ENCODE measurements at regions of chr7 and their contacts with region 1.

Region 1: DNA sequence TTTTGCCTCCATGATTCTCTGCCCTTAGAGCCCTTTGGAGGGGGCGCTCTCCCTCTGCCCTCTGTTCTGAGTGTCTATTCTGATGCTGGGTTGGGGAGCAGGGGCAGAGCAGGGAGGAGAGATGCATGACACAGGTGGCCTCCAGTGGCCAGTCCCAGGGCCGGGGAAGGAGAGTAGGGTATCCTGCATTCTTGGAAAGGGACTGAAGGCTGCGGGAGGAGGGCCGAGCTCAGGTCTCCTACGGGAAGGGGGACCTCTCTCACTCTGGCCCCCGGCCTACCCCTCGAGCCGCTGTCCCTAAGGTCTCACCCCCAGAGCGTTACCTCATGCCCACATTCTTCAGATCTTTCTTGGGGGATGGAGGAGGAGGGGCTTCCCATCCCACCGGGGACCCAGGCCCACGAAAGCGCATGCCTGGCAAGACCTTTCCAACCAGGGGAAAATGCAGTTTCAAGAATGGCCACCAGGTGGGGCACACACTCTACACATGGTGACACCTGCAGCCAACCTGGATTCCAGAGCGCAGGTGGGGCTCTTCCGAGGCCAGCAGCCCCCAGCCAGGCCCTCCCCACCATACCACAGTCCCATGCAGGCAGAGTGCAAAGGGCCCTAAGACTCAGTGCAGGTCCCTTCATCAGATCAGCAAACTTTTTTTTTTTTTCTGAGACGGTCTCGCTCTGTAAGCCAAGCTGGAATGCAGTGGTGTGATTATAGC is 86.4 kb downstream of the MYL10 start:
- DNase-seq: peak; percentile 79
- H3K4me3 ChIP-seq: no peak overlapping the region
- H3K27ac ChIP-seq: no peak overlapping the region
- H3K4me1 ChIP-seq: peaks cover 0 to 4% (median 0%) of the 10 kb centered on the region in 4 donors
- H3K27me3 ChIP-seq: no peaks in the 10 kb centered on the region
- CTCF ChIP-seq: peak; percentile 92 to 94 (median 94)
- EP300 ChIP-seq: no peak
- POLR2A ChIP-seq: no peak

Region 2: GRCh38 chr7:101882595-101883564 is 340.2 kb after region 1 on chr7:
- in situ Hi-C with region 1: no loop called
- intact Hi-C with region 1: no loop called
- DNase-seq: peak; percentile 85
- H3K4me3 ChIP-seq: no peak overlapping the region
- H3K27ac ChIP-seq: peak overlapping the region; percentile 87 to 90 (median 88)
- H3K4me1 ChIP-seq: peaks cover 53 to 82% (median 62%) of the 10 kb centered on the region in 4 donors
- H3K27me3 ChIP-seq: no peaks in the 10 kb centered on the region
- CTCF ChIP-seq: no peak
- EP300 ChIP-seq: peak; percentile 8
- POLR2A ChIP-seq: no peak

Region 3: GRCh38 chr7:102396027-102397019 is 853.6 kb after region 1 on chr7 and contains the start of gene PRKRIP1:
- in situ Hi-C with region 1: loop called in 1 of 4 experiments (anchors 25 kb)
- intact Hi-C with region 1: no loop called
- DNase-seq: peak; percentile 89
- H3K4me3 ChIP-seq: peak within 1 kb of the TSS; percentile 78 to 97 (median 84)
- H3K27ac ChIP-seq: peak within 1 kb of the TSS; percentile 79 to 95 (median 85)
- H3K4me1 ChIP-seq: peaks cover 4 to 20% (median 14%) of the 10 kb centered on the region in 4 donors
- H3K27me3 ChIP-seq: no peaks in the 10 kb centered on the region
- CTCF ChIP-seq: no peak
- EP300 ChIP-seq: no peak
- POLR2A ChIP-seq: peak; percentile 68
- total RNA-seq, gene PRKRIP1: 24.8 to 97.3 (median 33.6) TPM